ENCODE measurements at regions of chr10 and their contacts with region 1.

Region 1: DNA sequence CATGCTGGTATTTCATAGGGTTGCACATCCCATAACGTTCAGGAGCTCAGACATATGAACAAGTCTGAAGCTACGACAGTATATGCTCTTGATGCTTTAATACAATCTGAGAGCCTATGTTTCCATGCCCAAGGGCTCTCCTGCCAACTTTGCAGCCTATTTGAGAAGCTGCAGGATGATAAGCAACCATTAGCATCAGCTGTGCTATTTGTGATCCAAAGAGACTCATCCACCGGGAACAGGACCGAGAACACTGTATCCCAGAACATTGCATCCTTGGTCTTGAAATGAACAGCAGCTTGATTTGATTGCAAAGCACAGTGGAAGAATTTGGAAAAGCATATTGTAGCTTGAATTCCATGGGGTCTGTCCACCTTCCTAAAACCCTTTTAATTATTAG is 156.2 kb upstream of the PTER start:
- DNase-seq: no peak
- H3K4me3 Mint-ChIP-seq: no peak overlapping the region
- H3K27ac Mint-ChIP-seq: no peak overlapping the region
- H3K4me1 Mint-ChIP-seq: no peaks in the 10 kb centered on the region
- H3K27me3 Mint-ChIP-seq: peaks cover 2% of the 10 kb centered on the region

Region 2: GRCh38 chr10:16360016-16360415 is 79.4 kb after region 1 on chr10:
- CTCF ChIA-PET with region 1: no interaction called
- intact Hi-C with region 1: no loop called
- DNase-seq: no peak
- H3K4me3 Mint-ChIP-seq: no peak overlapping the region
- H3K27ac Mint-ChIP-seq: no peak overlapping the region
- H3K4me1 Mint-ChIP-seq: no peaks in the 10 kb centered on the region
- H3K27me3 Mint-ChIP-seq: peaks cover 13% of the 10 kb centered on the region

Region 3: GRCh38 chr10:16717622-16718395 is 437.2 kb after region 1 on chr10:
- CTCF ChIA-PET with region 1: no interaction called
- intact Hi-C with region 1: no loop called
- DNase-seq: no peak
- H3K4me3 Mint-ChIP-seq: no peak overlapping the region
- H3K27ac Mint-ChIP-seq: no peak overlapping the region
- H3K4me1 Mint-ChIP-seq: no peaks in the 10 kb centered on the region
- H3K27me3 Mint-ChIP-seq: no peaks in the 10 kb centered on the region

Region 4: DNA sequence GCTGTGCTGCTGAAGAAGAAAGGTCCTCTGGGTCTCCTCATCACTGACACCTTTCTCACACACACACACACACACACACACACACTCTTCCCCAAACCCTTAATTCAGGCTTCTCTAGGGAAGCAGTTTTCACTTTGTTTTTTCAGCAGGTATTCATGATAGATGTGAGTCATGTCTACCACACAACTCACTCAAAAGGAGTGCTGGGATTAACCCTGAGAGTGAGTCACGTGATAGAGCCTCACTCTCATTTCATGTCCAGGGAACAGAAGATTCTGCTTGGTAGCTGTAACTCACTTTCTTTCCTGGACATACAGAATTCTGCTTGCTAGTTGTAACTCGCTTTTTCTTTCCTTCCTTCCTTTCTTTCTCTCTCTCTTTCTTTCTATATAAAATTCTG is 992.8 kb after region 1 on chr10:
- CTCF ChIA-PET with region 1: no interaction called
- intact Hi-C with region 1: loop called (anchors 5 kb)
- DNase-seq: peak; percentile 25
- H3K4me3 Mint-ChIP-seq: no peak overlapping the region
- H3K27ac Mint-ChIP-seq: no peak overlapping the region
- H3K4me1 Mint-ChIP-seq: peaks cover 8% of the 10 kb centered on the region
- H3K27me3 Mint-ChIP-seq: peaks cover 3% of the 10 kb centered on the region

Measured in activated naive CD4-positive, alpha-beta T cell treated with anti-CD3 and anti-CD28 coated beads for 36 hours (primary cell).